AG04450 (cell line): ENCODE measurements at regions of chr10 and their contacts with region 1.

Region 1: GRCh38 chr10:101617102-101617823 is 29.1 kb downstream of the DPCD start:
- DNase-seq: no peak
- H3K4me3 ChIP-seq: no peak overlapping the region
- H3K27ac ChIP-seq: no peak overlapping the region
- H3K27me3 ChIP-seq: no peaks in the 10 kb centered on the region
- CTCF ChIP-seq: peak; percentile 32

Region 2: GRCh38 chr10:101769541-101770180 is 152.4 kb after region 1 on chr10:
- CTCF ChIA-PET with region 1: interaction called, 10 read pairs
- POLR2A ChIA-PET with region 1: interaction called, 3 read pairs
- DNase-seq: no peak
- H3K4me3 ChIP-seq: no peak overlapping the region
- H3K27ac ChIP-seq: no peak overlapping the region
- H3K27me3 ChIP-seq: peaks cover 85% of the 10 kb centered on the region
- CTCF ChIP-seq: no peak